ENCODE measurements at regions of chr13 and their contacts with region 1.

Region 1: DNA sequence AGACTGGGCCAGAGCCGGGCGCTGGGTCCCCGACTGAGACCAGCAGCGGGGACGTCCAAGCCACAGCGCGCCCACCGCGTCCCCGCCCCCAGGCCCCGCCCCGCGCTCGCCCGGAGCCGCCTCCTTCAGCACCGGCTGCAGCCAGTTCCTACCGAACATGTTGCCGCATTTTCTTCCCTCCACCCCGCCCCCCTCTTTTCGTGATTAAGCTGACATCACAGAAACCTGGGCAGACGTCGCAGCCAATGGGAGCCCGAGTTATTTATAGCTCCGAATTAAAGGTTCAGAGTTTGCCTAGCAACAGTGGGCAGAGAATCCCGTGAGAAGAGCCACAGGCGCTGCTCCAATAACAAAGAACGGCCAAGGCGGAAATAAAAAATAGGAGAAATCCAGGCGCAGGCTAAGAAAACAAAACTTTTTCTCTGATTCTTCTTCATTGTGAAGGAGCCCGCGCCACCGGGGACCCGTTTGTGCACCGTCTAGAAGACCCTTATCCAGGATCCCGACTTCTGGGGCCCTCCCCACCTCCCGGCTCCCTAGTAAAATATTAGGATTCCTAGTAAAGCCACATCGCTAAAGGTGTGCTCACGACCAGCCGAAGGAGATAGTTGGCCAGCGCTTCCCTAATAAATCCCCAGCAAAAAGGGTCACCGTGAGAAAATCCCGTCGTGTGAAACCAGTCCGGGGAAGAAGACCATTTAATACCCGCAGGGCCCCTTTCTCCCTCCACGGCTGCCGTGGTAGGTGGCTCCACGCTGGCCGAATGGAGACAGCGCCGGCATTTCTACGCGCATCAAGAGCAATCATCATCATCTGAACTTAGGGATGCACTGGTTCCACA is 61.7 kb downstream of the SERP2 start:
- DNase-seq: peak; percentile 99
- H3K4me3 ChIP-seq: peak overlapping the region; percentile 43 to 72
- H3K27ac ChIP-seq: peak overlapping the region; percentile 94 to 98
- H3K4me1 ChIP-seq: peaks cover 3% of the 10 kb centered on the region
- H3K27me3 ChIP-seq: no peaks in the 10 kb centered on the region
- CTCF ChIP-seq: no peak
- POLR2A ChIP-seq: peak; percentile 91

Region 2: GRCh38 chr13:43905435-43906031 is 529.8 kb before region 1 on chr13:
- intact Hi-C with region 1: loop called (anchors 2 kb)
- DNase-seq: peak; percentile 53
- H3K4me3 ChIP-seq: no peak overlapping the region
- H3K27ac ChIP-seq: no peak overlapping the region
- H3K4me1 ChIP-seq: no peaks in the 10 kb centered on the region
- H3K27me3 ChIP-seq: no peaks in the 10 kb centered on the region
- CTCF ChIP-seq: peak in 3 of 4 experiments; percentile 73 to 90 (median 89)
- POLR2A ChIP-seq: no peak

Region 3: GRCh38 chr13:44160591-44161191 is 274.7 kb before region 1 on chr13:
- intact Hi-C with region 1: loop called (anchors 2 kb)
- DNase-seq: no peak
- H3K4me3 ChIP-seq: no peak overlapping the region
- H3K27ac ChIP-seq: no peak overlapping the region
- H3K4me1 ChIP-seq: peaks cover 6% of the 10 kb centered on the region
- H3K27me3 ChIP-seq: no peaks in the 10 kb centered on the region
- CTCF ChIP-seq: no peak
- POLR2A ChIP-seq: no peak

Region 4: GRCh38 chr13:44218501-44219240 is 216.7 kb before region 1 on chr13:
- intact Hi-C with region 1: loop called (anchors 5 kb)
- DNase-seq: peak; percentile 96
- H3K4me3 ChIP-seq: no peak overlapping the region
- H3K27ac ChIP-seq: peak overlapping the region; percentile 78 to 81
- H3K4me1 ChIP-seq: peaks cover 30% of the 10 kb centered on the region
- H3K27me3 ChIP-seq: no peaks in the 10 kb centered on the region
- CTCF ChIP-seq: no peak
- POLR2A ChIP-seq: no peak

Region 5: GRCh38 chr13:44300895-44301638 is 134.3 kb before region 1 on chr13:
- intact Hi-C with region 1: loop called (anchors 10 kb)
- DNase-seq: peak; percentile 73
- H3K4me3 ChIP-seq: no peak overlapping the region
- H3K27ac ChIP-seq: peak overlapping the region; percentile 42 to 59
- H3K4me1 ChIP-seq: peaks cover 9% of the 10 kb centered on the region
- H3K27me3 ChIP-seq: no peaks in the 10 kb centered on the region
- CTCF ChIP-seq: peak in 2 of 4 experiments; percentile 31 to 32
- POLR2A ChIP-seq: no peak

Region 6: GRCh38 chr13:44474122-44474909 is 39.0 kb after region 1 on chr13:
- intact Hi-C with region 1: no loop called
- DNase-seq: no peak
- H3K4me3 ChIP-seq: no peak overlapping the region
- H3K27ac ChIP-seq: no peak overlapping the region
- H3K4me1 ChIP-seq: no peaks in the 10 kb centered on the region
- H3K27me3 ChIP-seq: no peaks in the 10 kb centered on the region
- CTCF ChIP-seq: no peak
- POLR2A ChIP-seq: no peak